CD4-positive, alpha-beta memory T cell (primary cell): ENCODE measurements at regions of chr2 and their contacts with region 1.

Region 1: GRCh38 chr2:168920504-168921157 is 19.5 kb downstream of the G6PC2 start:
- DNase-seq: peak in 4 of 5 donors; percentile 34 to 47 (median 43)
- H3K4me3 ChIP-seq: no peak overlapping the region
- H3K4me3 Mint-ChIP-seq: no peak overlapping the region
- H3K27ac ChIP-seq: no peak overlapping the region
- H3K27ac Mint-ChIP-seq: no peak overlapping the region
- H3K4me1 ChIP-seq: peaks cover 10% of the 10 kb centered on the region
- H3K4me1 Mint-ChIP-seq: peaks cover 0 to 8% (median 7%) of the 10 kb centered on the region in 4 donors
- H3K27me3 ChIP-seq: no peaks in the 10 kb centered on the region
- H3K27me3 Mint-ChIP-seq: peaks cover 4 to 24% of the 10 kb centered on the region in 2 donors

Region 2: GRCh38 chr2:168136392-168136977 is 784.1 kb before region 1 on chr2:
- CTCF ChIA-PET with region 1: interaction called, 3 read pairs
- POLR2A ChIA-PET with region 1: no interaction called
- intact Hi-C with region 1: loop called (anchors 1 kb)
- DNase-seq: peak in 4 of 5 donors; percentile 19 to 41 (median 30)
- H3K4me3 ChIP-seq: no peak overlapping the region
- H3K4me3 Mint-ChIP-seq: no peak overlapping the region
- H3K27ac ChIP-seq: no peak overlapping the region
- H3K27ac Mint-ChIP-seq: peak overlapping the region in 1 of 7 donors; percentile 73
- H3K4me1 ChIP-seq: no peaks in the 10 kb centered on the region
- H3K4me1 Mint-ChIP-seq: peaks cover 8 to 25% (median 21%) of the 10 kb centered on the region in 4 donors
- H3K27me3 ChIP-seq: no peaks in the 10 kb centered on the region
- H3K27me3 Mint-ChIP-seq: no peaks in the 10 kb centered on the region

Region 3: DNA sequence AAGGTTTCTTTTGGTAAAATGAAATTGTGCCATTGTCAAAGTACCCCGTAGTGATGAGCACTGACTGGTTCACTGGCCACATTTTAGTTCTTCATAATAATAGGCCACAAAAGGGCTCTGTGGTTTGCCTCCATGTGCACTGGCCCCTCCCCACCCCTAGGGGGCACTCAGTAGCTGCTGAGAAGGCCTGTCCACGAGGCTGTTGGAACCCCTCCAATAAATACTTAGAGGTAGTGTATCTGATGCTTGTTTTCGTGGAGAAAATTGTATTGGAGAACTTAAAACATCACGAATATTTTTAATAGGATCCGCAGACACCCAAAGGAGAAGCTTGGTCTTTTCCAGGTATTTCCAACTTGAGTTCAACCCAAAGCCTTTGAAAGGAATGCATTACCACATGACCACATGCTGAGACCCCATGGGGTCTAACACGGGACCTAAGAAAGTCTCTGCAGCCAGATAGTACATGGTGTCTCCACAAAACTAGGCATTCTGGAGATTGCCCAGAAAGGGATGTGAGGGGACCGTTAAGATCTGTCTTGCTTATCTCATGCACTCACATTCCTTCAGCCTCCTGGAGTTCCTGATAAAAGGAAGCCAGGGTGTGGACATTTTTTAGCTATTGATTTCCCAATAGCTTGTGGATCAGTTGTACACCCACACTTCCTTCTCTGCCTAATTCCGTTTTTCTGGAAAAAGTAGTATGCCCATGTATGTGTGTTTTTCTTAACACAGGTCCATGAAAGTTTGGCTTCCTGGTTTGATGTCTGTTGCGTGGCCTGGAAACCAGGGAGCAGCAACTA is 146.7 kb before region 1 on chr2:
- CTCF ChIA-PET with region 1: no interaction called
- POLR2A ChIA-PET with region 1: no interaction called
- intact Hi-C with region 1: loop called (anchors 5 kb)
- DNase-seq: no peak
- H3K4me3 ChIP-seq: no peak overlapping the region
- H3K4me3 Mint-ChIP-seq: no peak overlapping the region
- H3K27ac ChIP-seq: no peak overlapping the region
- H3K27ac Mint-ChIP-seq: no peak overlapping the region
- H3K4me1 ChIP-seq: no peaks in the 10 kb centered on the region
- H3K4me1 Mint-ChIP-seq: no peaks in the 10 kb centered on the region
- H3K27me3 ChIP-seq: no peaks in the 10 kb centered on the region
- H3K27me3 Mint-ChIP-seq: no peaks in the 10 kb centered on the region

Region 4: GRCh38 chr2:168858146-168858545 is 62.5 kb before region 1 on chr2:
- CTCF ChIA-PET with region 1: no interaction called
- POLR2A ChIA-PET with region 1: no interaction called
- intact Hi-C with region 1: no loop called
- DNase-seq: no peak
- H3K4me3 ChIP-seq: no peak overlapping the region
- H3K4me3 Mint-ChIP-seq: no peak overlapping the region
- H3K27ac ChIP-seq: no peak overlapping the region
- H3K27ac Mint-ChIP-seq: no peak overlapping the region
- H3K4me1 ChIP-seq: no peaks in the 10 kb centered on the region
- H3K4me1 Mint-ChIP-seq: no peaks in the 10 kb centered on the region
- H3K27me3 ChIP-seq: no peaks in the 10 kb centered on the region
- H3K27me3 Mint-ChIP-seq: no peaks in the 10 kb centered on the region